Psoas muscle (tissue), 8 donors: ENCODE measurements at regions of chr2 and their contacts with region 1.

Region 1: GRCh38 chr2:233409286-233409991 is 55.1 kb downstream of the DGKD start:
- DNase-seq: no peak
- ATAC-seq: no peak
- H3K4me3 ChIP-seq: no peak overlapping the region
- H3K27ac ChIP-seq: peak overlapping the region; percentile 24
- H3K4me1 ChIP-seq: peaks cover 27% of the 10 kb centered on the region
- H3K27me3 ChIP-seq: no peaks in the 10 kb centered on the region
- CTCF ChIP-seq: no peak

Region 2: DNA sequence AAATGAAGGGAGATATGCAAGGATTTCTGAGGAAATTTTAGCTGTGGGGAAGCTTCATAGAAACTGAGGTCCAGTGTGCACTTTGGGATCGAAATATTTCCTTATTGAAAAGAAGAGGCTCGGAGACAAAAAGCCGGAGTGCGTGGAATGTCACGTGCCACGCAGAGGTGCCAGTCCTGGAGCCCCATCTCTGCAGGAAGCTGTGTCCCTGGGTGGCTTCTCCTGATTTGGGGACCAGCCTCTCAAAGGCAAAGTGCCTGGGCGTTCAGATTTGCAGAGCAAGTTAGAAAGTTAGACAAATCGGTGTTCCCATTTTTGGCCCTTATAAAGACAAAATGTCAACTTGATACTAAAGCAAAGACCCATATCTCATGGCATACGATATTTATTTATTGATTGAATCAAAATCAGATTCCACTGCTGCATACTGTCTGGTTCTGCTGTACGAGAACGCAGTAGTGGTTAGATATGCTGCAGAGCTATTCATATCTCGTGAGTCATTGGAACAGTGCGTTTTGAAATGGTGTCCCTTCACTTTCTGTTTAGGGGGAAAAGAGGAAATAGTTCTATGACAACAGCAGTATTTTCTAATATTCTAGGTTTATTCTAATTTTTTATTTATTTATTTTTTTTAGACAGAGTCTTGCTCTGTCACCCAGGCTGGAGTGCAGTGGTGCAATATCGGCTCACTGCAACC is 167.1 kb before region 1 on chr2:
- intact Hi-C with region 1: no loop called
- DNase-seq: no peak
- ATAC-seq: peak in 3 of 4 donors; percentile 50 to 68 (median 54)
- H3K4me3 ChIP-seq: no peak overlapping the region
- H3K27ac ChIP-seq: no peak overlapping the region
- H3K4me1 ChIP-seq: no peaks in the 10 kb centered on the region
- H3K27me3 ChIP-seq: peaks cover 0 to 3% (median 0%) of the 10 kb centered on the region in 3 donors
- CTCF ChIP-seq: no peak

Region 3: DNA sequence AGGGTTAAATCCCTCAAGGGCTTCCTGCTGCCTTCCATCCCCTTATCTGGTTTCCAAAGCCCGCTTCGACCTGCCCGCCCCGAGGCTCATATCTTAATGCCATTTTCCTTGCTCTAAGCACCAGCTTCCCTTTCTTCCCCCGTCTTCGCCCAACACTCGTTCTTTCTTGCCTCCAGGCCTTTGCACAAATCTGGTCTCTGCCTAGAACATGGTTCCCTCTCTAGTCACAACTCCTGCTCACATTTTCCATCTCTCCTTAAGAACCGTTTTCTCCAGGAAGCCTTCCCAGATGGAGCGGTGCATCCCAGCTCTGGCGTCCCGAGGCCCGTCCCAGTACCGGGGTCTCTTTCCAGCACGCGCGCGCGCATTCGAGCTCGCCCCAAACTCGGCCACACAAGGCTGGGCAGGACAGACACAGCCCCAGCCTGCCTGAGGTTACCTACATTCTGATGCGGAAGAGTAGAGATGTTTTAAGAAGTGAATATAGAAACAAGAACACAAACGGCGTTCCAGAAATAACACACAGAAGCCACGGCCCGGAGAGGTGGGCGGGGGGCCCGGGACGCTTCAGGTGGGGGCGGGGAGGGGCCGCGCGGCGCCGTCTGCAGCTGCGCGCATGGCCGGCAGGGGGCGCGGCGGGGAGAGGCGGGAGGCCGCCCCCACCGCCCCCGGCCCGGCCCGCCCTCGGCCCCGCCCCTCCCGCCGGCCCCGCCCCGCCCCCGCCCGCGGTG is 55.5 kb before region 1 on chr2 and contains the start of gene DGKD:
- intact Hi-C with region 1: loop called in 1 of 2 experiments (anchors 5 kb)
- DNase-seq: peak; percentile 71 to 82
- ATAC-seq: peak; percentile 84 to 90 (median 85)
- H3K4me3 ChIP-seq: peak within 1 kb of the TSS; percentile 75
- H3K27ac ChIP-seq: peak within 1 kb of the TSS; percentile 72
- H3K4me1 ChIP-seq: peaks cover 45% of the 10 kb centered on the region
- H3K27me3 ChIP-seq: no peaks in the 10 kb centered on the region
- CTCF ChIP-seq: peak; percentile 41
- total RNA-seq, gene DGKD: 77.9 to 365 (median 244) TPM

Region 4: GRCh38 chr2:233436191-233436581 is 26.7 kb after region 1 on chr2:
- intact Hi-C with region 1: loop called in 1 of 2 experiments (anchors 2 kb)
- DNase-seq: peak in 1 of 2 donors; percentile 78
- ATAC-seq: peak; percentile 36 to 75 (median 63)
- H3K4me3 ChIP-seq: no peak overlapping the region
- H3K27ac ChIP-seq: peak overlapping the region; percentile 96
- H3K4me1 ChIP-seq: peaks cover 59% of the 10 kb centered on the region
- H3K27me3 ChIP-seq: no peaks in the 10 kb centered on the region
- CTCF ChIP-seq: no peak

Region 5: DNA sequence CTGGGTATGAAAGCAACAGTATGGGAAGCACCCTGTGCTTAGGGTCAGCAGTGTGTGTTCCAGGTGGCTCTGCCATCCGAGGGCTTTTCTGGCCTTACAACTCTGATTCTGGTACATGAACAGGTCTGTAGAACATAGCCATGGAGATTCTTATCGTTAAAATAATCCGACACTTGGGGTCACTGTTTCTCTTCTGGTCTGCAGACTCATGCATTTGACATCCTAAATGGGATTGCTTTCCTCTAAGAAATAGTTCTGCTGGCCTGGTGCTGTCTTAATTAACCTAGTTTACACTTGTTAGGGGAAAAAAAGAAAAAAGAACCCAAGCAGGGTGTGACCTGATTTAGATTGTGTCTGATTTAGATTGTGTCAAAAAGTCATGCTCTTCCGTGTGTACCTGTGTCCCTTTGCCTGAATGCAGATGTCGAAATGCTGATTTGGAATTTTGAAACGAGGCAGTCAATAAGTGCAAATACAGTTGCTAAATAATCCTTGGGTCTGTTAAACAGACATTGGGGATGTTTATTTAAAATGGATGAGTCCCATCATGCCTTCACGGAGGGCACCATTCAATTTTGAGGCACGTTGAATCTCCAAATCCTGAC is 567.4 kb after region 1 on chr2:
- intact Hi-C with region 1: no loop called
- DNase-seq: no peak
- ATAC-seq: no peak
- H3K4me3 ChIP-seq: no peak overlapping the region
- H3K27ac ChIP-seq: no peak overlapping the region
- H3K4me1 ChIP-seq: no peaks in the 10 kb centered on the region
- H3K27me3 ChIP-seq: peaks cover 0 to 2% (median 0%) of the 10 kb centered on the region in 3 donors
- CTCF ChIP-seq: no peak